HEK293 (cell line): ENCODE measurements at regions of chr9 and their contacts with region 1.

Region 1: GRCh38 chr9:91718071-91718470 is 232.0 kb downstream of the ROR2 start:
- H3K4me3 ChIP-seq: no peak overlapping the region
- H3K27ac ChIP-seq: no peak overlapping the region
- H3K4me1 ChIP-seq: no peaks in the 10 kb centered on the region
- CTCF ChIP-seq: no peak

Region 2: DNA sequence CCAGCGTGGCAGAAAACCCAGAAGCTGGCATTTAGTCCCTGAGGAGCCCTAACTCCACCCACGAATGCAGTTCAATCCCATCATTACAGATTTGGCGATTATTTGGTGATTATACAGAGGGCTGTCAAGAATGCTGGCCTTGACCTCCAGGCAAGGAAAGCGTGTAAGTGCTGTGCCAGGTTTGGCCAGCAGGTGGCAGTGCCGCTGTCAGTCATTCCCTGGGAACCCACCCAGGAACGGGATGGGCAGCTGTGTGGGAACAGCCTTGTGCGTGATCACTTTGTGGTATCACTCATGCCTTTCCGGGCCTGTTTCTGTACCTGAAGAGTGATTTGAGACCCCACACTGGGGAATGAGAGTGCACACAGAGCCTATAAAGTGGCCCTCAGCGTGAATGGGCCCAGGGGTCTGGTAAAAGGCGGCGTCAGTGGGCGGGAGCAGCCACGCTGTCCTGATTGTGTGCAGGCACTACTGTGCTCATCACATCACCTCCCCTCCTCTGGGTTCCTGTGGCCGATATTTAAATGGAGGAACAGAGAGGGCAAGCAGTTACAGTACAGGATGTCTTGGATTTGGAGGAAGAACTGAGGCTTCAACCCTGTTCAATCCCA is 16.4 kb after region 1 on chr9:
- CTCF ChIA-PET with region 1: interaction called, 15 read pairs
- POLR2A ChIA-PET with region 1: no interaction called
- H3K4me3 ChIP-seq: no peak overlapping the region
- H3K27ac ChIP-seq: no peak overlapping the region
- H3K4me1 ChIP-seq: no peaks in the 10 kb centered on the region
- CTCF ChIP-seq: peak; percentile 71

Region 3: GRCh38 chr9:91750343-91750742 is 32.3 kb after region 1 on chr9:
- CTCF ChIA-PET with region 1: no interaction called
- POLR2A ChIA-PET with region 1: no interaction called
- H3K4me3 ChIP-seq: no peak overlapping the region
- H3K27ac ChIP-seq: no peak overlapping the region
- H3K4me1 ChIP-seq: peaks cover 2% of the 10 kb centered on the region; the same call in 1 of the 2 replicates
- CTCF ChIP-seq: no peak